ENCODE measurements at regions of chr3 and their contacts with region 1.

Region 1: DNA sequence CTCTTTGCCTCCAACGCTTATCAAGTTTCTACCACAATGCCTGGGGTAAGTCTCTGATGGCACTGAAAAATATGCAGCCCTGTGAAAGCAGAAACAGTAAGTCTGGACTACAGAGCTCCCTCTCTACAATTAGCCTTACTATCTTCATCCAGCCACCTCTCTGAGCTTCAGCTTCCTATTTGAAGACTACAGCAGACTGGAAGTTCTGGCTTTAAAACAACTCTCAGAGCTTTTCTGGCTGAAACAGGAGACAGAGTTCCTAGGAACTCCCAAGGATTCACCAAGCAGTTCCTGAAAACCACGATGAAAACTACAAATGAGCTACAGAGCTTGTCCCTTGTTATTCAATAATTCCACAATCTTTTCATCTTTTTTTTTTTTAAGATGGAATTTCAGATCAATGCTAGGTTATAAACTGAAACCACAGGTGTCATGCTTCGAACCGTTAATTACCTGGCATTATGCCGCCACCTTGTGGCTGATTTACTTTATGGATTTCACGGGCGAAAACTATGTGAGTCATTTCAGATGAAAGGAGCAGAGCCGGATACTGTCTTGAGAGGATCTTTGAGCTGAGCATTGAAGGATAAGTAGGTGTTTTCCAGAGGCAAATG is 3.9 kb downstream of the CRYGS start:
- DNase-seq: peak; percentile 63 to 90 (median 83)
- ATAC-seq: peak; percentile 96
- H3K4me3 ChIP-seq: no peak overlapping the region
- H3K4me3 Mint-ChIP-seq: no peak overlapping the region
- H3K27ac ChIP-seq: no peak overlapping the region
- H3K27ac Mint-ChIP-seq: peak overlapping the region; percentile 7
- H3K4me1 ChIP-seq: peaks cover 6% of the 10 kb centered on the region
- H3K4me1 Mint-ChIP-seq: peaks cover 11% of the 10 kb centered on the region
- H3K27me3 ChIP-seq: no peaks in the 10 kb centered on the region
- H3K27me3 Mint-ChIP-seq: no peaks in the 10 kb centered on the region
- CTCF ChIP-seq: peak; percentile 80

Region 2: DNA sequence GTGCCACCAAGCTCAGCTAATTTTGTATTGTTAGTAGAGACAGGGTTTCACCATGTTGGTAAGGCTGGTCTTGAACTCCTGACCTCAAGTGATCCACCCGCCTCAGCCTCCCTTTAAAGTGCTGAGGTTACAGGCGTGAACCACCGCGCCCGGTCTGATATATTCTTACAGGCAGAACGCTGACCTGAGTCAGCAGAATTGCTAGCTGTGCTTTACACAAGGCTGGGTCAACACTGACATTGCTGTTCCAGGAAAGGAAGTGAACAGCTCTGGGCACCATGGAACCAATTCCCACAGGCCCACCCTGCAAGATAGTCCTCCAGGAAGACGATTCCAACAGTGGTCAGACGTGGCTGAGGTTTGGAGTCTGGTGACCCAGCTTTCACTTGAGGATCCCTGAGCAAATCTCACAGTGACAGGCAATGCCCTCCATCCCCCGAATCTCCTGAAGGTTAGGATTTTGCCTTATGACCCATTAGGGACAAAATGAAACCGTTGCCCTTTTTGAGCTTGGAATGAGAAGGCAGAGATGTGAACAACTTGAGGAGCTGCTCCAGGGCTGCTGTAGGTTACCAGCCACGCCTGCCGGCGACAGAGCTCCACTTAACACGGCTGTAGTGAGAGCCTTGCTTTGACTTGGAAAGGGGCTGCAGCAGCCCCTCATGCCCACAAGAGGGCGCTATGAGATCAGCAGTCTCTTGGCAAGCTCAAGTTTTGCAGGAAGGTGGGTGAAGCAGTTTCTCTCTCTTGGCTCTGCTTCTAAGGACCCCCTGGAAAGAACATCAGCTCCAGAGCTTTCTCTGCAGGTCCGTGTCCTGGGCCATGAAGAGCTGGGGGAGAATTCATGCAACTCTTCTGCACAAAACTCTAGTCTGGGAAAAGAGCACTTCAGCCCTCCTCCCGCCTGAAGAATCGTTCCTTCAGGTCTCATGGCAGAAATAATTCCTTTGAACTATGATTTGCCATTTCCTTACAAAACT is 880.1 kb before region 1 on chr3:
- CTCF ChIA-PET with region 1: no interaction called
- POLR2A ChIA-PET with region 1: no interaction called
- intact Hi-C with region 1: loop called in 1 of 2 experiments (anchors 1 kb)
- DNase-seq: peak; percentile 24 to 72 (median 59)
- ATAC-seq: peak; percentile 64
- H3K4me3 ChIP-seq: no peak overlapping the region
- H3K4me3 Mint-ChIP-seq: no peak overlapping the region
- H3K27ac ChIP-seq: no peak overlapping the region
- H3K27ac Mint-ChIP-seq: no peak overlapping the region
- H3K4me1 ChIP-seq: peaks cover 3% of the 10 kb centered on the region
- H3K4me1 Mint-ChIP-seq: no peaks in the 10 kb centered on the region
- H3K27me3 ChIP-seq: no peaks in the 10 kb centered on the region
- H3K27me3 Mint-ChIP-seq: peaks cover 12% of the 10 kb centered on the region
- CTCF ChIP-seq: peak; percentile 89

Region 3: DNA sequence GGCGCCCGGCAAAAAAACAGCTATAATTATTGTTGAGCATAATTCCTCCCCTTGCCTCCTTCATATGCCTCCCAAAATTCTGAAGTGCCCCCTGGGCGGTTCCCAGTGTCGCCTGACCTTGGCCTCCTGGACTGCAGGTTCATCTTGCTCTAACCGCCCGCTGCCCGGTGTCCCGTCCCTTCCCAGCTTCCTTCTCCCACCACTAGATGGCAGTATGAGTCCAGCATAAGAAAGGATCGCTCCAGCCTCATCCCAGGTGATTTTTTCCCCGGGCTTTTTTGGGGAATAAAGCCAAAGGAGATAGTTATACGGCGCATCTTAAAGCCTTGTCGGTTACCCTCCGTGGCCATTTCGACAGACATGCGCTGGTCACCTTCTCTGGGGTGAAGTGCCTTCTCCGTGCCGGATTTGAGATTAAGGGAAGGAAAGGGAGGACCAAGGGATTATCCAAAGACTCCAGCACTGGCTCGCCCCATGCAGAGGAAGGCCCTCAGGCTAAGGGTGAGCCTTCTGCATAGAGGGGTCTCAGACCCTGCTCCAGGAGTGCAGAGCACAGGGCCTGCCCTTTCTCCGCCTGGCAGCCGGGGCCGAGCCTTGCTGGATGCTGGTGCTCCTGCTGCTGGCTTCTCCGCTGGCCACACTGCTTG is 556.7 kb before region 1 on chr3:
- CTCF ChIA-PET with region 1: interaction called, 86 read pairs
- POLR2A ChIA-PET with region 1: no interaction called
- intact Hi-C with region 1: loop called (anchors 1 kb)
- DNase-seq: peak; percentile 14 to 76 (median 56)
- ATAC-seq: peak; percentile 61
- H3K4me3 ChIP-seq: no peak overlapping the region
- H3K4me3 Mint-ChIP-seq: no peak overlapping the region
- H3K27ac ChIP-seq: no peak overlapping the region
- H3K27ac Mint-ChIP-seq: no peak overlapping the region
- H3K4me1 ChIP-seq: peaks cover 4% of the 10 kb centered on the region
- H3K4me1 Mint-ChIP-seq: peaks cover 3% of the 10 kb centered on the region
- H3K27me3 ChIP-seq: peaks cover 0 to 9% of the 10 kb centered on the region in 2 experiments
- H3K27me3 Mint-ChIP-seq: peaks cover 8% of the 10 kb centered on the region
- CTCF ChIP-seq: peak; percentile 84

Region 4: GRCh38 chr3:186259612-186260383 is 280.5 kb before region 1 on chr3:
- CTCF ChIA-PET with region 1: interaction called, 201 read pairs
- POLR2A ChIA-PET with region 1: interaction called, 3 read pairs
- intact Hi-C with region 1: loop called (anchors 1 kb)
- DNase-seq: peak; percentile 42 to 80 (median 54)
- ATAC-seq: peak; percentile 93
- H3K4me3 ChIP-seq: no peak overlapping the region
- H3K4me3 Mint-ChIP-seq: no peak overlapping the region
- H3K27ac ChIP-seq: no peak overlapping the region
- H3K27ac Mint-ChIP-seq: peak overlapping the region; percentile 66
- H3K4me1 ChIP-seq: no peaks in the 10 kb centered on the region
- H3K4me1 Mint-ChIP-seq: peaks cover 16% of the 10 kb centered on the region
- H3K27me3 ChIP-seq: no peaks in the 10 kb centered on the region
- H3K27me3 Mint-ChIP-seq: no peaks in the 10 kb centered on the region
- CTCF ChIP-seq: peak; percentile 59

Region 5: DNA sequence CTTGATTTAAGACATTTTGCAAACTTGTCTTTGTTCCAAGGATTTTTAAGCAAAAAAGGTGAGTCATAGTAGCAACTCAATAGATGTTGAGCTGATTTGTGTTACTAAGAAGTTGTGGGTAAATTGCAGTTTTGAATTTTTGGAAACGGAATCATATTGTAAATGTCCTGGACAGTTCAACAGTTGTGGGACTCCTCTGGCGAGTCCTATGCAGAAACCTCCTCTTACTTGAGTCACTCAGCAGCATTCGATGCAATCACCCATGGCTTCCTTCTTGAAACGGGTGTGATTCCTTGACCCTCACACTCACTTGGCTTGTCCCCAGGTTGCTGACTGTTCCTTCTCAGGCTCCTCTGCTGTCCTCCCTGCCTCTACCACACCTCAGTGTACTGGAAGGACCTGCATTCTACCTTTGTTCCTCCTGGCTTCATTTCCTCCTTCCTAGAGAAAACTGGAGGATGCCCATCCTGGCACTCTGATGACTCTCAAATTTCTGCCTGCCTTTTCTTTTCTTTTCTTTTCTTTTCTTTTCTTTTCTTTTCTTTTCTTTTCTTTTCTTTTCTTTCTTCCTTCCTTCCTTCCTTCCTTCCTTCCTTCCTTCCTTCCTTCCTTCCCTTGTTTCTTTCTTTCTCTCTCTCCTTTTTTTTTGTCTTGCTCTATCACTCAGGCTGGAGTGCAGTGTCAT is 125.5 kb before region 1 on chr3:
- CTCF ChIA-PET with region 1: interaction called, 20 read pairs
- POLR2A ChIA-PET with region 1: no interaction called
- intact Hi-C with region 1: no loop called
- DNase-seq: no peak
- ATAC-seq: no peak
- H3K4me3 ChIP-seq: no peak overlapping the region
- H3K4me3 Mint-ChIP-seq: no peak overlapping the region
- H3K27ac ChIP-seq: no peak overlapping the region
- H3K27ac Mint-ChIP-seq: no peak overlapping the region
- H3K4me1 ChIP-seq: peaks cover 8% of the 10 kb centered on the region
- H3K4me1 Mint-ChIP-seq: peaks cover 19% of the 10 kb centered on the region
- H3K27me3 ChIP-seq: no peaks in the 10 kb centered on the region
- H3K27me3 Mint-ChIP-seq: peaks cover 15% of the 10 kb centered on the region
- CTCF ChIP-seq: no peak

Region 6: GRCh38 chr3:186520957-186521842 is 19.1 kb before region 1 on chr3:
- CTCF ChIA-PET with region 1: interaction called, 36 read pairs
- POLR2A ChIA-PET with region 1: interaction called, 7 read pairs
- intact Hi-C with region 1: no loop called
- DNase-seq: no peak
- ATAC-seq: no peak
- H3K4me3 ChIP-seq: no peak overlapping the region
- H3K4me3 Mint-ChIP-seq: no peak overlapping the region
- H3K27ac ChIP-seq: no peak overlapping the region
- H3K27ac Mint-ChIP-seq: no peak overlapping the region
- H3K4me1 ChIP-seq: peaks cover 30% of the 10 kb centered on the region
- H3K4me1 Mint-ChIP-seq: peaks cover 54% of the 10 kb centered on the region
- H3K27me3 ChIP-seq: no peaks in the 10 kb centered on the region
- H3K27me3 Mint-ChIP-seq: no peaks in the 10 kb centered on the region
- CTCF ChIP-seq: no peak

Measured in CD8-positive, alpha-beta T cell (primary cell).